Heart right ventricle (tissue), 16 donors: ENCODE measurements at regions of chr2 and their contacts with region 1.

Region 1: GRCh38 chr2:86623651-86624541 is at the start of gene RNF103:
- DNase-seq: peak; percentile 96 to 98
- ATAC-seq: peak; percentile 95 to 98 (median 97)
- H3K4me3 ChIP-seq: peak within 1 kb of the TSS; percentile 59 to 94 (median 86)
- H3K27ac ChIP-seq: peak within 1 kb of the TSS; percentile 97 to 99 (median 98)
- H3K4me1 ChIP-seq: peaks cover 0 to 36% (median 29%) of the 10 kb centered on the region in 9 donors
- H3K27me3 ChIP-seq: no peaks in the 10 kb centered on the region
- CTCF ChIP-seq: no peak
- total RNA-seq, gene RNF103: 33.2 to 83.0 (median 59.1) TPM

Region 2: DNA sequence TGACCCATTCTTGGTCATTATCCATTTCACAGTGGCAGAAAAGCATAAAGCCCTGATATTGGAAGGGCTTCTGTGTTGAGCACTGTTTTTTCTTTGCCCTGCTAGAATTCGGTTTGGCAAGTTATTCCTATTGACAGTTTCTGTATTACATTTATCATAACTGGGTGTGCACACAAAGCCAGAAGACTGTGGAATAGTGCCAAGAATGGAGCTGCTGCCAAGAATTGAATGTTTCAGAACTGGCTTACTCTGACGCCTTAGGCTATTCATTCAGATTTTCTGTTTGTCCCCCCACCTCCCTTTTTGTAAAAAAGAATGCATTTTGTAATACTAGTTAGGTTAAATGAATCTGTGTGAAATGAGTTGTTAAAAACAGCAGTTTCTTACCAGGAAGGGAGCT is 170.1 kb before region 1 on chr2:
- intact Hi-C with region 1: no loop called
- DNase-seq: peak in 1 of 2 donors; percentile 84
- ATAC-seq: peak; percentile 59 to 93 (median 84)
- H3K4me3 ChIP-seq: no peak overlapping the region
- H3K27ac ChIP-seq: peak overlapping the region in 8 of 10 donors; percentile 0 to 61 (median 39)
- H3K4me1 ChIP-seq: peaks cover 12 to 60% (median 40%) of the 10 kb centered on the region in 9 donors
- H3K27me3 ChIP-seq: no peaks in the 10 kb centered on the region
- CTCF ChIP-seq: no peak

Region 3: GRCh38 chr2:86518481-86518880 is 105.4 kb before region 1 on chr2:
- intact Hi-C with region 1: loop called in 4 of 10 experiments (anchors 10 kb)
- DNase-seq: peak in 1 of 2 donors; percentile 36
- ATAC-seq: peak in 7 of 8 donors; percentile 60 to 74 (median 72)
- H3K4me3 ChIP-seq: no peak overlapping the region
- H3K27ac ChIP-seq: no peak overlapping the region
- H3K4me1 ChIP-seq: peaks cover 0 to 13% (median 0%) of the 10 kb centered on the region in 9 donors
- H3K27me3 ChIP-seq: no peaks in the 10 kb centered on the region
- CTCF ChIP-seq: peak; percentile 17 to 65 (median 47)

Region 4: DNA sequence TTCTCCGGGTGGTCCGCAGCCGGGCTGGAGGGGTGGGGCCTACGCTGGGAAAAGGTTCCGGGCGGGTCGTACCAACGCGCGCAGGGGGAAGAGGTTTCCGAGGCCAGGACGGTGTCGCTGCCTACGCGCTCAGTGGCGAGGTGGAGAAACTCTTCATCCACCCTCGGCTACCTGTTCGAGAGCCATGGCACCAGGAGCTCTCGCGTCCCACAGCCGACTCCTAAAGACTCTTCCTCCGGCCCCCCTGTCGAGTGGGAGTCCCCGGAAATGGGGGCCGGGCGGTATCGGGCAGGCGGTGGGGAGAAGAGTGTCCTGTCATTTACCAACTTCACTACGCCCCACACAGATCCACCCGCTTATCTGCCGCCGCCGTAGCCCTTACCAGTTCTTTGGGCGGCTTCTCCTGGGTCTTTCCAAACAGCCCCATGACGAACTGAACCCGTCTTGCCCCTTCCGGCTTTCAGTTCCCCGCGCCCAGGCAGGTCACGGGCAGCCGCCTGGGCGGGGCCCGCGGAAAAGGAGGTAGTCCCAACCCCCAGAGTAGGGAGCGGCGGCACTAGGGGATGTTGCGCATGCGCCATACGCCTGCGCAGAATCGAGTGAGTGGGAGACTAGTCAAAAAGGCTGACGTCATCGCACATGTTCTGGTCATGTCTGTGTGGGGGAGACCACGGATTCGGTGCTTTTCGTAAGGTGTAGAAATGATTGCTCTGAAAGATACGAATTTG is 60.8 kb before region 1 on chr2 and contains the start of gene CHMP3:
- intact Hi-C with region 1: loop called in 4 of 10 experiments (anchors 1 to 10 kb)
- DNase-seq: peak; percentile 97 to 98
- ATAC-seq: peak; percentile 97 to 99 (median 98)
- H3K4me3 ChIP-seq: peak within 1 kb of the TSS; percentile 49 to 86 (median 68)
- H3K27ac ChIP-seq: peak within 1 kb of the TSS; percentile 97 to 100 (median 98)
- H3K4me1 ChIP-seq: peaks cover 4 to 51% (median 33%) of the 10 kb centered on the region in 9 donors
- H3K27me3 ChIP-seq: no peaks in the 10 kb centered on the region
- CTCF ChIP-seq: no peak
- total RNA-seq, gene CHMP3: 129 to 180 (median 160) TPM

Region 5: DNA sequence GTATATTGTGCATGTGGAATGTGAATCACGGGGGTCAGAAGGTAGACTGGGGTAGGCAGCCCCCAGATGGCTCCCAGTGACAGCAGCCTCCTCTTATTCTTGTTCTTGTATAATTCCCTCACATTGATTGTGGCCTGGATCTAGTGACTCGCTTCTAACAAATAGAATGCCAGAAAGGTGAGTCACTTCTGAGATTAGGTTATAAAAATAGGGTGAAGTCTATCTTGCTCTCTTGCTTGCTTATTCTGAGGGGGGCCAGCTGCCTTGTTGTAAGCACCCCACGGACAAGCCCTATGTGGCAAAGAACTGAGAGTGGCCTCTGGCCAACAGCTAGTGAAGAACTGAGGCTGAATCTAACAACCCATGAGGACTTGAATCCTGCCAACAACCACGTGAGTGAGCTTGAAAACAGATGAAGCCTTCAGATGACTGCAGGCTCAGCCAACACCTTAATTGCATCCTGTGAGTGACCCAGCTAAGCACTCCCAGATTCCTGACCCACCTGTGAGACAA is 80.6 kb after region 1 on chr2:
- intact Hi-C with region 1: loop called in 4 of 10 experiments (anchors 5 to 10 kb)
- DNase-seq: peak; percentile 29 to 78
- ATAC-seq: peak; percentile 71 to 93 (median 92)
- H3K4me3 ChIP-seq: peak overlapping the region in 2 of 10 donors; percentile 17 to 23
- H3K27ac ChIP-seq: peak overlapping the region; percentile 66 to 90 (median 84)
- H3K4me1 ChIP-seq: peaks cover 0 to 30% (median 7%) of the 10 kb centered on the region in 9 donors
- H3K27me3 ChIP-seq: no peaks in the 10 kb centered on the region
- CTCF ChIP-seq: no peak

Region 6: DNA sequence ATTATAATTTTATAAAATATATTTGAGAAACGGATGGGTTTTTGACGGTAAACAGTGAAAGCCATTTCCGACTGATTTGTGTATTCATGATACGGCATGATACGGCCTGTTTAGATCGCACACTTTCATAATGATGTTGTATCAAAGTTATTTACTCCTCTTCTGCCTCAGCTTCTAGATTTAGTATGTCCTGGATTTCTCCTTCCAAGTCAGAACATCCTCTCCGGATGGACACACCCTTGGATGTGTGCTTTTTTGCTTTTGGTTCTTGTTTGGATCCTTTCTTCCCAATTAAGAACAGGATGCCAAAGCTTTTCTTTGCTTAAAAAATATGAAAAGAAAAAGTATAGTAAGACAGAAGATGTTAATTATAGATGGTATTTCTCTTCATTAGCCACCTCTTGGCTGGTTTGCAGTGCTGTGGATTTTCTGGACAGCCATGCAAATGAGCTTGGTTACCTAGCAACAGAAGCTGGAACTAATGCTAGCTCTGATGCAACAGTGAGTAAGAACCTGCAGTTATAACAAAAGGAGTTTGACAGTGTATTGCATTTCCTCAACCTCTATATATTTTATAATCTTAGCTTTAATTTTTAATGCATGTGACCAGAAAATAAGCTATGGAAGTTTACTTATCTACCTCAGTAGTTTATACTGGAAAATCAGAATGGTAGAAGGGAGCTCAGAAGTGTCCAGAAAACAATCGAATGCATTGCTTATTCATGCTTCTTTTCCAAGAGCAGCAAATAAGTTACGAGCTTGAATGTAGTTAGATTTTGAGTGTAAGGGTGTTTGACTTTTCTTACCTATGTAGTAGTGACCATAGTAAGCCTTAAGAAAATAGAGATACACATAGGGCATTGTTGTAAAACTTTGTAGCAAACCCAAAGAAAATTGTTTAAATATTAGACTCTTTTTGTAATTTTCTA is 124.1 kb after region 1 on chr2:
- intact Hi-C with region 1: loop called in 1 of 10 experiments (anchors 10 kb)
- DNase-seq: peak in 1 of 2 donors; percentile 12
- ATAC-seq: peak in 5 of 8 donors; percentile 71 to 91 (median 77)
- H3K4me3 ChIP-seq: no peak overlapping the region
- H3K27ac ChIP-seq: peak overlapping the region in 5 of 10 donors; percentile 2 to 54 (median 23)
- H3K4me1 ChIP-seq: peaks cover 0 to 62% (median 33%) of the 10 kb centered on the region in 9 donors
- H3K27me3 ChIP-seq: no peaks in the 10 kb centered on the region
- CTCF ChIP-seq: no peak